CD8-positive, alpha-beta T cell (primary cell): ENCODE measurements at regions of chr16 and their contacts with region 1.

Region 1: GRCh38 chr16:55824473-55825000 is 8.4 kb downstream of the CES1 start:
- DNase-seq: no peak
- ATAC-seq: no peak
- H3K4me3 ChIP-seq: no peak overlapping the region
- H3K4me3 Mint-ChIP-seq: no peak overlapping the region
- H3K27ac ChIP-seq: no peak overlapping the region
- H3K27ac Mint-ChIP-seq: no peak overlapping the region
- H3K4me1 ChIP-seq: no peaks in the 10 kb centered on the region
- H3K4me1 Mint-ChIP-seq: no peaks in the 10 kb centered on the region
- H3K27me3 ChIP-seq: no peaks in the 10 kb centered on the region
- H3K27me3 Mint-ChIP-seq: peaks cover 15% of the 10 kb centered on the region
- CTCF ChIP-seq: no peak

Region 2: DNA sequence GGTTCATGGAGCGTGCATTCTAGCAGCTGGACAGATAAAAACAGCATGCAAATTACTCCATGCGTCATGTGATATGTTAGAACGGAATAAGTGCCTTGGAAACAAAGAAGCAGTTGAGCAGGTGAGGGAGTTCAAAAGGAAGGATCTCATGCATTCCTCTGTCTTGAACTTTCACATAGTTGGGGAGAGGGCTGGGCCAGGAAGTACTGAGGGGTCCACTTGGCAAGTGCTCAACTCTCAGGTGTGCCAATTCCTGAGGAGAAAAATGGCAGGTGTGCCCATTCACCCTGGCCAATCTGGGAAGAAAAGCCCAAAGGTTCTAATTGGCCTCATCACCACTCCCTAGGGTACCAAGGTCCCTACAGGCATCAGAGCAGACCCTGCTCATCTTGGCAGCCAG is 59.4 kb before region 1 on chr16:
- CTCF ChIA-PET with region 1: no interaction called
- POLR2A ChIA-PET with region 1: no interaction called
- intact Hi-C with region 1: loop called in 1 of 2 experiments (anchors 1 kb)
- DNase-seq: no peak
- ATAC-seq: no peak
- H3K4me3 ChIP-seq: no peak overlapping the region
- H3K4me3 Mint-ChIP-seq: no peak overlapping the region
- H3K27ac ChIP-seq: no peak overlapping the region
- H3K27ac Mint-ChIP-seq: no peak overlapping the region
- H3K4me1 ChIP-seq: no peaks in the 10 kb centered on the region
- H3K4me1 Mint-ChIP-seq: no peaks in the 10 kb centered on the region
- H3K27me3 ChIP-seq: no peaks in the 10 kb centered on the region
- H3K27me3 Mint-ChIP-seq: peaks cover 15% of the 10 kb centered on the region
- CTCF ChIP-seq: no peak

Region 3: DNA sequence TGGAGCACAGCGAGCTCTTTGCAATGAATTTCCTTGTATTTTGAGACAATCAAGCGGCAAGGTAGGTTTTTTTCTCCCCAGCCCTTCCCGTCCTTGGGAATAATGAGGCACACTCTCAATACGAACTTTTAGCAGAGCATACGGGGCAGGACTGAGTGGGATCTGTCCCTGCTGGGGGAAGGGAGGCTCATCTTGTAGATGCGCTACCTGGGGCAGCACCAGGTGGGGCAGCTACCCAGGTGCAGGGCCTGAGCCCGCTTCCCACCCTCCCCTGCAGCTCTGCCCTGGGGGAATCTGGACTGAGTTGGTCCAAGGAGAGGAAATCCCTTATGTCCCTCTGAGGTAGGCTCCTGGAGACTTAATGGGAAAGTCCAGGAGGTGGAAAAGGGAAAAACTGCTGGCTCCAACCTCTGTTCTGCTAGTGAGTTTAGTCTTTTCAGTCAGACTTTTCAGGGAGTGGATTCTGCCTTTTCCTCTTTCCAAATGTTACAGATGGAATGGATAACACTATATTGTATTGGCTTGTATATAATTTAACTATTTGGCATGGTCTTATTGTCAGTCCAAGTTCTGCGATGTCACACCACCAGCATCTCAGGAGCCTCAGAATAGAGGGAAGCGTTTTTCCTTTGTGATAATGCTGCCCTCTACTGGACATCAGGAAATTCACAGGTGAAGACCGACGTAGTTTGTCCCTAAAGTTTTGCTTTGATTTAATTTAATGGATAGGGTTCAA is 18.0 kb after region 1 on chr16:
- CTCF ChIA-PET with region 1: no interaction called
- POLR2A ChIA-PET with region 1: no interaction called
- intact Hi-C with region 1: no loop called
- DNase-seq: peak in 5 of 9 experiments; percentile 5 to 61 (median 17)
- ATAC-seq: no peak
- H3K4me3 ChIP-seq: no peak overlapping the region
- H3K4me3 Mint-ChIP-seq: no peak overlapping the region
- H3K27ac ChIP-seq: no peak overlapping the region
- H3K27ac Mint-ChIP-seq: no peak overlapping the region
- H3K4me1 ChIP-seq: no peaks in the 10 kb centered on the region
- H3K4me1 Mint-ChIP-seq: no peaks in the 10 kb centered on the region
- H3K27me3 ChIP-seq: no peaks in the 10 kb centered on the region
- H3K27me3 Mint-ChIP-seq: peaks cover 14% of the 10 kb centered on the region
- CTCF ChIP-seq: peak; percentile 68

Region 4: DNA sequence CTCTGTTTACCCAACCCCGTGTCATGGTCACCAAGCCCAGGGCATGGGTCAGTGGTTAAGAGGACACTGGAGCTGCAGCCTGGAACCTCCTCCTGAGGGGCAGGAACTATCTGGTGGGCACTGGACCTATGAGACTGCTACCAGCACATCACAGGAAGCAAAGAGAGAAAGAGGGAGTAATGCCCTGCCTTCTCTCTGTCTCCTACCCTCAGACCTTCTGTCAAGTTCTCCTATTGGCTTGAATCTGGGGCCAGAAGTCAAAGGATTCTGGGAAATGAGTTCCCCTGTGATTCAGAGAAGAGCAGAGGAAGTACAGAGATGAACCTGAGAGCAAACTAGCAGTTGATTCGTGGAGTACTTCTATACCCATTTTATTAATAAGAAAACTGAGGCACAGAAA is 243.8 kb after region 1 on chr16:
- CTCF ChIA-PET with region 1: no interaction called
- POLR2A ChIA-PET with region 1: no interaction called
- intact Hi-C with region 1: loop called in 1 of 2 experiments (anchors 10 kb)
- DNase-seq: no peak
- ATAC-seq: no peak
- H3K4me3 ChIP-seq: no peak overlapping the region
- H3K4me3 Mint-ChIP-seq: no peak overlapping the region
- H3K27ac ChIP-seq: no peak overlapping the region
- H3K27ac Mint-ChIP-seq: no peak overlapping the region
- H3K4me1 ChIP-seq: no peaks in the 10 kb centered on the region
- H3K4me1 Mint-ChIP-seq: no peaks in the 10 kb centered on the region
- H3K27me3 ChIP-seq: no peaks in the 10 kb centered on the region
- H3K27me3 Mint-ChIP-seq: peaks cover 7% of the 10 kb centered on the region
- CTCF ChIP-seq: no peak